CD4-positive, alpha-beta T cell (primary cell): ENCODE measurements at regions of chr21 and their contacts with region 1.

Region 1: DNA sequence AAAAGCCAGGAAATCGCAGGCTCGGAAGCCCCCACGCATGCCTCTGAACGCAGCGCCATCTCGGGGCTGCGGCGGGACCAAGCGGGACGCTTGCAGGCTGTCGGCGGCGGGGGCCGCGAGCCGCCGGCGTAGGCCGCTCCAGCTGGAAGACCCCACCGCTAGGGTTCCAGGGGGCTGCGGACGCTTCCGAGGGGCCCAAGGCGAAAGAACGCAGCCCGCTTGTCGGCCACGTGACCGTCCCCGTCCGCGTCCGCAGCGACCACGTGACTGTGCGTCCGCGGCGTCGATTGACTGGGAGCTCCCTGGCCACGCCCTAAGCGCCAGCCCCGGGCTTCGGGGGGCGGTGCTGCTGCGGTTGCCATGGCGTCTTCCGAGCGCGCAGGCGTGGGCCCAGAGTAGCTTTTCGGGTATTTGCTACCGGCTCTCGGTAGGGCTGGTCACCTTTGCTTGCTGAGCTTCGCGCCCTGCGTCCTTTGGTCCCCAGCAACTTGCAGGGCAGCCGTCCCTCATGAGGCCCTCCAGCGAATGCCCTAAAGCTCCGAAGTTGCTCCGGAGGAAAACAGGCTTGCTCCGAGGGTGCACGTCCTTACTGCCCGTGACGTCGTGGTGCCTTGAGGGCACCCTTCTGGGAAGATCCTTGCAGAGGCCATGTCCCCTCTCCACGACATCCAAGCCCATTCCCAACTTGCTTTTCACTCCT is 197.2 kb downstream of the DYRK1A start:
- DNase-seq: peak; percentile 76 to 97 (median 90)
- ATAC-seq: peak; percentile 77
- H3K4me3 ChIP-seq: peak overlapping the region; percentile 96
- H3K4me3 Mint-ChIP-seq: peak overlapping the region; percentile 95
- H3K27ac ChIP-seq: peak overlapping the region; percentile 88 to 97
- H3K27ac Mint-ChIP-seq: peak overlapping the region; percentile 98
- H3K4me1 ChIP-seq: peaks cover 28% of the 10 kb centered on the region
- H3K4me1 Mint-ChIP-seq: peaks cover 22% of the 10 kb centered on the region
- H3K27me3 ChIP-seq: no peaks in the 10 kb centered on the region
- H3K27me3 Mint-ChIP-seq: no peaks in the 10 kb centered on the region
- CTCF ChIP-seq: peak; percentile 50

Region 2: GRCh38 chr21:37072988-37073416 is 490.8 kb before region 1 on chr21 and contains the starts of genes PIGP and TTC3:
- CTCF ChIA-PET with region 1: interaction called, 4 read pairs
- POLR2A ChIA-PET with region 1: interaction called, 4 read pairs
- intact Hi-C with region 1: loop called in 1 of 2 experiments (anchors 5 kb)
- DNase-seq: peak; percentile 92 to 99 (median 95)
- ATAC-seq: peak; percentile 64
- H3K4me3 ChIP-seq: peak within 1 kb of the TSS; percentile 88
- H3K4me3 Mint-ChIP-seq: peak within 1 kb of the TSS; percentile 98
- H3K27ac ChIP-seq: peak within 1 kb of the TSS; percentile 93
- H3K27ac Mint-ChIP-seq: peak within 1 kb of the TSS; percentile 94
- H3K4me1 ChIP-seq: peaks cover 22% of the 10 kb centered on the region
- H3K4me1 Mint-ChIP-seq: peaks cover 60% of the 10 kb centered on the region
- H3K27me3 ChIP-seq: no peaks in the 10 kb centered on the region
- H3K27me3 Mint-ChIP-seq: no peaks in the 10 kb centered on the region
- CTCF ChIP-seq: no peak
- total RNA-seq, gene PIGP: 11.1 to 14.8 TPM
- total RNA-seq, gene TTC3: 141 to 142 TPM

Region 3: DNA sequence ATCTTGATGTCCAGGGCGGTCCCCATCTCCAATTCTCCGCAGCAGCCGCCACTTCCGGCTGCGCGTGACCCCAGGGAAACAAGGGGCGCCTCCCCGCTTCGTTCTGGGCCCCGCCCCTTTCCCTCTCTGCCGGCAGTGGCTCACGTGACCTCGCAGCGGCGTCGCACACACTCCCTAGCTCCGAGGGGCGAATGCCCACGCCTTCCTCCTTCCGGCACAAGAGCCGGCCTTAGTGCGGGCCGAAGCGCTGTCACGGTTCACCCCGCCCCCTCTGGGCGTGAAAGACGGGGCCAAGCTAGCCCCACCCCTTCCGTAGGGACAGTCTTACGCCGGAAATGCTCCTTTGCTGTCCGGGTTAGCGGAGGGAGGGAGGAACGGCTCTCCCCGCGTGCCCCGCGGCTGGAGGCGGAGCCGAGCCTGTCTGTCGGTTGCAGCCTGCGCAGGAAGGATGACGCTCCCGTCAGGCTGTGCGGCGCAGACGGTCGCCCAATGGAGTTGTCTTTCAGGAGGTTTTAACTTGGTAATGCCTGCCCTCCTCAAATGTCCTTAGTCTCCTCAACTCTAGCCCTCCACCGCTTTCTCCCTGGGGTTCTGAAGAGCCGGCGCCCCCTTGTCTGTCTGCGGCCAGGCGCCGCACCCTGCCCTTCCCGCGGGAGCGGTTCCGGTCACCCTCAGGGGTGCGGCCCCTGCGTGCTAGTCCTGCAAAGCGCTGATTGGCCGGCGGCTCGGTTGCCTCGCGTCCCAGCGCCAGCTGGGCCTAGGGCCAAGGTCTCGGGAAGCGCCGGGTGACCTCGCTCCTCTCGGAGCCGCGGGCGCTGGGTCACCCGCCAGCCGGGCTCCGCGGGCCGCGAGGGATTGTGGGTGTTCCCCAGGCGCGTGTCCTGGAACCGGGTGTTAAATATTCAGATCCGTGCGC is 296.3 kb before region 1 on chr21 and contains the start of gene VPS26C:
- CTCF ChIA-PET with region 1: interaction called, 4 read pairs
- POLR2A ChIA-PET with region 1: interaction called, 49 read pairs
- intact Hi-C with region 1: loop called (anchors 1 to 5 kb)
- DNase-seq: peak; percentile 94 to 100 (median 96)
- ATAC-seq: peak; percentile 84
- H3K4me3 ChIP-seq: peak within 1 kb of the TSS; percentile 90
- H3K4me3 Mint-ChIP-seq: peak within 1 kb of the TSS; percentile 93
- H3K27ac ChIP-seq: peak within 1 kb of the TSS; percentile 96 to 98
- H3K27ac Mint-ChIP-seq: peak within 1 kb of the TSS; percentile 97
- H3K4me1 ChIP-seq: peaks cover 19% of the 10 kb centered on the region
- H3K4me1 Mint-ChIP-seq: peaks cover 56% of the 10 kb centered on the region
- H3K27me3 ChIP-seq: no peaks in the 10 kb centered on the region
- H3K27me3 Mint-ChIP-seq: no peaks in the 10 kb centered on the region
- CTCF ChIP-seq: no peak
- total RNA-seq, gene VPS26C: 31.8 to 36.0 TPM

Region 4: DNA sequence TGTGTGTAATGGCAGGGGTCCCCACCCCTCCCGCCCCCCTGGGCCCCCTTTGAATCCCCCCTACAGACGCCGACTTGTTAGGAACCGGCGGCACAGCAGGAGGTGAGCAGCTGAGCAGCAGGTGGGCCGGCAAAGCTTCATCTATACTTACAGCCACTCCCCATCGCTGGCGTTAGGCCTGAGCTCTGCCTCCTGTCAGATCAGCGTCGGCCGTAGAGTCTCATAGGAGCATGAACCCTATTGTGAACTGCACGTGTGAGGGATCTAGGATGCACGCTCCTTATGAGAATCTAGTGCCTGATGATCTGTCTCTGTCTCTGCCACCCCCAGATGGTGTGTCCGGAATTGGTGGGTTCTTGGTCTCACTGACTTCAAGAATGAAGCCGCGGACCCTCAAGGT is 281.8 kb before region 1 on chr21:
- CTCF ChIA-PET with region 1: no interaction called
- POLR2A ChIA-PET with region 1: no interaction called
- intact Hi-C with region 1: no loop called
- DNase-seq: peak in 3 of 14 experiments; percentile 15 to 31 (median 24)
- ATAC-seq: no peak
- H3K4me3 ChIP-seq: peak overlapping the region; percentile 22
- H3K4me3 Mint-ChIP-seq: peak overlapping the region; percentile 75
- H3K27ac ChIP-seq: no peak overlapping the region
- H3K27ac Mint-ChIP-seq: peak overlapping the region; percentile 72
- H3K4me1 ChIP-seq: no peaks in the 10 kb centered on the region
- H3K4me1 Mint-ChIP-seq: no peaks in the 10 kb centered on the region
- H3K27me3 ChIP-seq: no peaks in the 10 kb centered on the region
- H3K27me3 Mint-ChIP-seq: no peaks in the 10 kb centered on the region
- CTCF ChIP-seq: no peak

Region 5: GRCh38 chr21:37582590-37582989 is 18.8 kb after region 1 on chr21:
- CTCF ChIA-PET with region 1: interaction called, 4 read pairs
- POLR2A ChIA-PET with region 1: interaction called, 3 read pairs
- intact Hi-C with region 1: loop called in 1 of 2 experiments (anchors 1 kb)
- DNase-seq: peak in 3 of 14 experiments; percentile 1 to 25 (median 15)
- ATAC-seq: no peak
- H3K4me3 ChIP-seq: no peak overlapping the region
- H3K4me3 Mint-ChIP-seq: no peak overlapping the region
- H3K27ac ChIP-seq: no peak overlapping the region
- H3K27ac Mint-ChIP-seq: no peak overlapping the region
- H3K4me1 ChIP-seq: no peaks in the 10 kb centered on the region
- H3K4me1 Mint-ChIP-seq: no peaks in the 10 kb centered on the region
- H3K27me3 ChIP-seq: peaks cover 0 to 5% of the 10 kb centered on the region in 2 experiments
- H3K27me3 Mint-ChIP-seq: peaks cover 9% of the 10 kb centered on the region
- CTCF ChIP-seq: no peak

Region 6: GRCh38 chr21:37711836-37712568 is 148.2 kb after region 1 on chr21:
- CTCF ChIA-PET with region 1: no interaction called
- POLR2A ChIA-PET with region 1: no interaction called
- intact Hi-C with region 1: no loop called
- DNase-seq: peak in 6 of 14 experiments; percentile 5 to 46 (median 22)
- ATAC-seq: no peak
- H3K4me3 ChIP-seq: no peak overlapping the region
- H3K4me3 Mint-ChIP-seq: no peak overlapping the region
- H3K27ac ChIP-seq: no peak overlapping the region
- H3K27ac Mint-ChIP-seq: no peak overlapping the region
- H3K4me1 ChIP-seq: no peaks in the 10 kb centered on the region
- H3K4me1 Mint-ChIP-seq: no peaks in the 10 kb centered on the region
- H3K27me3 ChIP-seq: peaks cover 0 to 13% of the 10 kb centered on the region in 2 experiments
- H3K27me3 Mint-ChIP-seq: peaks cover 51% of the 10 kb centered on the region
- CTCF ChIP-seq: peak; percentile 53

Region 7: DNA sequence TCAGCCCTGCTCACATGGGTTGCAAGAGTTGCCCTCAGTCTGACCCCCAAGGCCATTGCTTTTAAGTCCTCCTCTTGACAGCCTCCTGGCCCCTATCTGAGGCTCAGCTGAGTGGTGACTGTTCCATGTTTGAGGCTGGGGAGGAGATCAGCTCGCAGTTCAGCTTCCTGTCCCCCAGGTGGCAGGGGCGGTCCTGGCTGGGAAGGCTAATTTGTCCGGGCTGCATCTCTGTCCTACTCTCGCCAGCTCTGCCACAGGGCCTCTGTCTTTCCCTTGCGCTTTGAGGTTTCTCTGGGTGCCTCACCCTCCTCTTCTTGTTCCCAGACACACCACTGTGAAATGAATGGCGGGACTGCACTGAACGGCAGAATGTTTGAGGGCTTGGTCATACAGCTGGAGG is 195.2 kb after region 1 on chr21:
- CTCF ChIA-PET with region 1: no interaction called
- POLR2A ChIA-PET with region 1: no interaction called
- intact Hi-C with region 1: no loop called
- DNase-seq: peak in 2 of 14 experiments; percentile 0 to 18
- ATAC-seq: no peak
- H3K4me3 ChIP-seq: no peak overlapping the region
- H3K4me3 Mint-ChIP-seq: no peak overlapping the region
- H3K27ac ChIP-seq: no peak overlapping the region
- H3K27ac Mint-ChIP-seq: no peak overlapping the region
- H3K4me1 ChIP-seq: no peaks in the 10 kb centered on the region
- H3K4me1 Mint-ChIP-seq: no peaks in the 10 kb centered on the region
- H3K27me3 ChIP-seq: no peaks in the 10 kb centered on the region
- H3K27me3 Mint-ChIP-seq: peaks cover 20% of the 10 kb centered on the region
- CTCF ChIP-seq: no peak

Region 8: GRCh38 chr21:38766987-38767722 is 1203.4 kb after region 1 on chr21:
- CTCF ChIA-PET with region 1: no interaction called
- POLR2A ChIA-PET with region 1: no interaction called
- intact Hi-C with region 1: loop called in 1 of 2 experiments (anchors 10 kb)
- DNase-seq: peak; percentile 22 to 90 (median 44)
- ATAC-seq: peak; percentile 84
- H3K4me3 ChIP-seq: peak overlapping the region; percentile 53
- H3K4me3 Mint-ChIP-seq: peak overlapping the region; percentile 85
- H3K27ac ChIP-seq: peak overlapping the region; percentile 51 to 78
- H3K27ac Mint-ChIP-seq: peak overlapping the region; percentile 92
- H3K4me1 ChIP-seq: peaks cover 24% of the 10 kb centered on the region
- H3K4me1 Mint-ChIP-seq: peaks cover 26% of the 10 kb centered on the region
- H3K27me3 ChIP-seq: no peaks in the 10 kb centered on the region
- H3K27me3 Mint-ChIP-seq: no peaks in the 10 kb centered on the region
- CTCF ChIP-seq: no peak